ENCODE measurements at regions of chr17 and their contacts with region 1.

Region 1: DNA sequence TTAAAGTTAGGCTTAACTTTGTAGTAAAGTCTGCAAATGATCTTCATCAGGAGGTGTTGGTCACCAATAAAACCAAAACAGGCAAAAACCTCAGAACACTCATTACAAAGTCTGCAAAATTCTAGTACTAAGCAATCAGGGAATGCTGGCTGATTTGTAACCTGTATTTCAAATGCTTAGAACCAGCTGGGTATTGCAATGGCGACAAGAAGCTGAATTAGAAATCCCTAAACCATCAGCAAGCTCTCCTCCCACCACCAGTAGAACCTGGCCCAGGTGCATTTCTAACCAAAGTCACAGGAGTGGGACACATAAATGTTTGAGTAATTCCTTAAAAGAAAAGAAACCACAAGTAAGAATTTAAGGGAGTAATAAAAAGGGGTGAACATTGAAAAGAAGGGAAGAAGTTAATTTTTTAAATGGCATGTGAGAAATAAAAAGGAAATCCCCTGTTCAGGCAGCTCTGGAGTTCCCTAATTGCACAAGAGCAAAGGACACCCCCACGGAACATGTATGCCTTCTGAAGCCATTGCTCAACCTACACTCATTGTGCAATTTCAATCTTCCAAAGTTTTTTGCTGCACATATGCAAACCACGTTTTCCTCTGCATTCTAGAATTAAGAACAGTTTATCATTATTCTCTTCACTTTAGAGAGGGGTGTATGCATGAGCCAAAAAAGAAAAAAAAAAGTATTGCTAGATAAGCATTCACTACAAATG is 102.9 kb downstream of the HIC1 start:
- DNase-seq: no peak
- H3K4me3 Mint-ChIP-seq: no peak overlapping the region
- H3K27ac Mint-ChIP-seq: peak overlapping the region; percentile 28
- H3K4me1 Mint-ChIP-seq: peaks cover 23% of the 10 kb centered on the region
- H3K27me3 Mint-ChIP-seq: no peaks in the 10 kb centered on the region

Region 2: DNA sequence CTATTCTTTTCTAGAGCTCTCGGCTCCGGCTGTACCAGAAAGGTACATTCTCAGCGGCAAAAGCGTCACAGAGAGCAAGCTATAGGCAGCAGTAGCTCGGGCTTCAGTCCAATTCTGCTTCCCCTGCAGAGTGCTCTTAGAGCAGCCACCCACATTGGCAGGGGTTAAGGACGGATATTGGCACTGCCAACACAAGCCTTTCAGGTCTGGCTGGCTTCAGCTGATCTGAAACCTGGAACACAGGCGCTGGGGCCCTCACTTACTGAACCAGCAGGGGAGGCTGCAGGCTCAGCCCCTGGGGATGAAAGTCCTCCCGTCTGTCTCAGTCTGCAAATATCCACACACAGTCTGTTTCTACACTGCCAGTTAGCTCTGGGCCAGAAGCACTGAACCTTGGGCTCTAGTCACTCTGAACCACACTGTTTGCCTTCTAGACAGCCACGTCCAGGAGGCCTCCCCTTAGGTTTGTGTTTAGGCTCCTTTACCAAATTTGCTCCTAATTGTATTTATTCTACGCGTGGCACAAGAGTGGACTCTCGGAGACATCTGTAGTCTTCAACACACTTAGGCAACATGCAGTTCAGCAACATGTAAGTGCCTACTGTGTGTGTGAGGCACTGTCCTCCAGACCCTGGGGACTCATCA is 62.8 kb before region 1 on chr17:
- intact Hi-C with region 1: loop called (anchors 5 kb)
- DNase-seq: no peak
- H3K4me3 Mint-ChIP-seq: no peak overlapping the region
- H3K27ac Mint-ChIP-seq: no peak overlapping the region
- H3K4me1 Mint-ChIP-seq: peaks cover 42% of the 10 kb centered on the region
- H3K27me3 Mint-ChIP-seq: no peaks in the 10 kb centered on the region

Region 3: GRCh38 chr17:2179615-2180295 is 21.9 kb after region 1 on chr17:
- intact Hi-C with region 1: no loop called
- DNase-seq: no peak
- H3K4me3 Mint-ChIP-seq: no peak overlapping the region
- H3K27ac Mint-ChIP-seq: no peak overlapping the region
- H3K4me1 Mint-ChIP-seq: peaks cover 32% of the 10 kb centered on the region
- H3K27me3 Mint-ChIP-seq: no peaks in the 10 kb centered on the region

Measured in activated T-helper 2 cell treated with anti-CD3 and anti-CD28 coated beads, Interferon-gamma antibody, Interleukin-2, Interleukin-4, amounts not matched to agents 10 μg/mL and 5 μg/mL and 100 μg/mL, durations not matched to agents 14 hours and 24 hours and 36 hours (primary cell).